Activated CD8-positive, alpha-beta T cell treated with anti-CD3 and anti-CD28 coated beads, Interleukin-2, amount 10 ng/mL, durations not matched to agents 7 days and 5 days (primary cell): ENCODE measurements at regions of chr2 and their contacts with region 1.

Region 1: GRCh38 chr2:84925724-84926376 is 20.4 kb downstream of the TMSB10 start:
- DNase-seq: peak; percentile 99
- ATAC-seq: peak; percentile 91
- H3K4me3 Mint-ChIP-seq: peak overlapping the region; percentile 89
- H3K27ac Mint-ChIP-seq: peak overlapping the region; percentile 88
- H3K4me1 Mint-ChIP-seq: peaks cover 49% of the 10 kb centered on the region
- H3K27me3 Mint-ChIP-seq: no peaks in the 10 kb centered on the region

Region 2: DNA sequence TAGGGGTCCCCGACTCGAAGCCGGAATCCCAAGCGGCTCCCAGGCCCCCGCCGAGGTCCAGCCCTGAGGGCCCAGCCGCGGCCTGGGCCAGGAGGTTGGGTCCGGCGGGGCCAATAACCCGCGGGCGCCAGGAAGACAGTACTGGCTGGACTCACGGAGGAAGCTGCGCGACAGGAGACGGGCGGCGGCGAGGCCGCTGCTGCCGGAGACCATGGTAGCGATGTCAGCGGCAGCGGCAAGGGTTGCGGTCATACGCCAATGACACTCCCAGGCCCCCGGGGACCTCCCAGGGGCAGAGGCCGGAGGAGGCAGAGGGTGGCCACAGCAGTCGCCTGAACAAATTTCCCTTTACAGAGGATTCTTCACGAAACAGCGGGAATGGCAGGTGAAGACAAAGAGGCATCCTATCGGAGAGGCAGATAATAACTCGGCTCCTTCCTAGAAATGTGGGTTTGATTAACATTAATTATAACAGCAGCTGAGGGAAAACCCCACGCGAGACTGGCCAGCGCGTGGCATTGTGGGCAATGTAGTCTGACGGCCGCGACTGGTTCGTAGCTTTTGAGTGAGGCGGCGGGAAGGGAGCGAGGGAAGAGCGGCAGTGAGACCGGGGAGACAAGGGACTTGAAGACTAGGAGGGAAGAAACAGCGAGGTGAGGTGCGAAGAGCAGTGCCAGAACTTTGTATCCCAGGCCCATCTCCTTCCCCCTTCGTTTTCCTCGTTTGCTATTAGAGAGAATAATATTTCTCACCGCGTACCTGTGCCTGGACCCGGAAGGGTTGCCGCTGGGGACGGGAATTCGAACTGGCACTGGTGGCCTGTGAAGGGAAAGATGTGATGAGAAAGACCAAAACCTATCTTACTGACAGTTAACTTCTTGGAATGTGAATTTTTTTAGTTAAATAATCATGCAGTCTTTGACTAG is 466.6 kb before region 1 on chr2 and contains the start of gene SUCLG1:
- CTCF ChIA-PET with region 1: interaction called, 16 read pairs
- POLR2A ChIA-PET with region 1: no interaction called
- DNase-seq: peak; percentile 91
- ATAC-seq: peak; percentile 96
- H3K4me3 Mint-ChIP-seq: peak within 1 kb of the TSS; percentile 85
- H3K27ac Mint-ChIP-seq: peak within 1 kb of the TSS; percentile 97
- H3K4me1 Mint-ChIP-seq: peaks cover 36% of the 10 kb centered on the region
- H3K27me3 Mint-ChIP-seq: no peaks in the 10 kb centered on the region
- total RNA-seq, gene SUCLG1: 76.4 to 81.8 TPM

Region 3: GRCh38 chr2:84676295-84676694 is 249.6 kb before region 1 on chr2:
- CTCF ChIA-PET with region 1: no interaction called
- POLR2A ChIA-PET with region 1: no interaction called
- DNase-seq: no peak
- ATAC-seq: no peak
- H3K4me3 Mint-ChIP-seq: no peak overlapping the region
- H3K27ac Mint-ChIP-seq: no peak overlapping the region
- H3K4me1 Mint-ChIP-seq: peaks cover 15% of the 10 kb centered on the region
- H3K27me3 Mint-ChIP-seq: no peaks in the 10 kb centered on the region

Region 4: DNA sequence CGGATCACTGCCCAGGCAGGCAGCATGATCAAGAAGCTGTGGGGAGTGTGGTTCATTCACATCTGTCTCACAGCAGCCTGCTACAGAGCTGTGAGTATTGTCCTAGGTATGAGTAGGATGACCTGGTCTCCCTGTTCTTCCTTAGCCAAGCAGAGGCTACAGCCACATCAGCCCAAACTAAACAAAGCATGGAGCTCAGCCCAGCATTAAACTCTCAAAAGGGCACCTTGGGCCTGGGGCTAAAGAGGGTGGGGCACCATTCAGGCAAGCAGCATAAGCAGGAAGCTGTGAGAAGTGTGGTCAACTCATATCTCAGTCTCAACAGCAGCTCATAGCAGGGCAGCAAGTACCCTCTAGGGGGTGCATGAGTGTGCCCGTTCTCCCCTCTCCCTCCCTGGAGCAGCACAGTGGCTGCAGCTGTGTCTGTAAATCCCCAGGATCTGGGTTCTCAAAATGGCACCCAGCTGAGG is 184.5 kb before region 1 on chr2:
- CTCF ChIA-PET with region 1: interaction called, 23 read pairs
- POLR2A ChIA-PET with region 1: interaction called, 4 read pairs
- DNase-seq: peak; percentile 75
- ATAC-seq: peak; percentile 99
- H3K4me3 Mint-ChIP-seq: no peak overlapping the region
- H3K27ac Mint-ChIP-seq: peak overlapping the region; percentile 85
- H3K4me1 Mint-ChIP-seq: peaks cover 15% of the 10 kb centered on the region
- H3K27me3 Mint-ChIP-seq: no peaks in the 10 kb centered on the region

Region 5: GRCh38 chr2:84856787-84857186 is 69.1 kb before region 1 on chr2:
- CTCF ChIA-PET with region 1: interaction called, 68 read pairs
- POLR2A ChIA-PET with region 1: interaction called, 3 read pairs
- DNase-seq: peak; percentile 75
- ATAC-seq: peak; percentile 80
- H3K4me3 Mint-ChIP-seq: peak overlapping the region; percentile 40
- H3K27ac Mint-ChIP-seq: peak overlapping the region; percentile 87
- H3K4me1 Mint-ChIP-seq: peaks cover 92% of the 10 kb centered on the region
- H3K27me3 Mint-ChIP-seq: no peaks in the 10 kb centered on the region

Region 6: GRCh38 chr2:84905181-84906107 is 20.4 kb before region 1 on chr2 and contains the start of gene TMSB10:
- CTCF ChIA-PET with region 1: interaction called, 222 read pairs
- POLR2A ChIA-PET with region 1: interaction called, 61 read pairs
- DNase-seq: peak; percentile 91
- ATAC-seq: peak; percentile 66
- H3K4me3 Mint-ChIP-seq: peak within 1 kb of the TSS; percentile 93
- H3K27ac Mint-ChIP-seq: peak within 1 kb of the TSS; percentile 95
- H3K4me1 Mint-ChIP-seq: peaks cover 75% of the 10 kb centered on the region
- H3K27me3 Mint-ChIP-seq: peaks cover 2% of the 10 kb centered on the region
- total RNA-seq, gene TMSB10: 4,520 to 4,885 TPM

Region 7: GRCh38 chr2:84958135-84959044 is 32.5 kb after region 1 on chr2:
- CTCF ChIA-PET with region 1: interaction called, 11 read pairs
- POLR2A ChIA-PET with region 1: interaction called, 3 read pairs
- DNase-seq: no peak
- ATAC-seq: no peak
- H3K4me3 Mint-ChIP-seq: no peak overlapping the region
- H3K27ac Mint-ChIP-seq: no peak overlapping the region
- H3K4me1 Mint-ChIP-seq: peaks cover 19% of the 10 kb centered on the region
- H3K27me3 Mint-ChIP-seq: no peaks in the 10 kb centered on the region

Region 8: DNA sequence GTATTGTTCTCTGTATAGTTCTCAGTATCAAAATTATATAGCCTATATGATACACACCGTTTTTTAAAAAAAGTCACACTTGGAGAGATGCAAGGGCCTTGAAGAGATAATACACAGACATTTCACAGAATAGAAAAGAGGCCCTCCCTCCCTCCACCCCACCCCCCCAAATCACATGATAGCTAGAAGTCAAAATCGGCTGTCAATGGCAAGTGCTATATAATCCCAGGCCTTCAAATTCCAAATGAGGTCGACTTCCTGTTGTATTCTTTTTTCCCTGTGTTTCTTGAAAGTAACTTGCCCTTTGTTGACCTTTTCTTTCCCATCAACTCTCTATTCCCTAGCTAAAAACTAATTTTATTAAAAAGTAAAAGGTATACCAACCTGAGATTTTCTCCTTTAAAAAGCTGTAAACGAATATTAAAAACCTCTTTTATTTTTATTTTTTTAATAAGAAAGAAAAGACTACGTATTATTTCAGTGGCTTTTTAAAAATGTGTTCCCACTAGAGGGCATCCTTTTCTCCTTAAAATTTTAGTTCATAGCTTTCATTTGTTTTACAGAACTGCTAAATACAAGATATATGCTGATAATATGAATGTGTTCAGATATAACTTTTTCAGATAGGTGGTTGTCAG is 91.7 kb after region 1 on chr2:
- CTCF ChIA-PET with region 1: interaction called, 71 read pairs
- POLR2A ChIA-PET with region 1: no interaction called
- DNase-seq: no peak
- ATAC-seq: no peak
- H3K4me3 Mint-ChIP-seq: no peak overlapping the region
- H3K27ac Mint-ChIP-seq: no peak overlapping the region
- H3K4me1 Mint-ChIP-seq: peaks cover 49% of the 10 kb centered on the region
- H3K27me3 Mint-ChIP-seq: no peaks in the 10 kb centered on the region